Sciatic nerve (tissue), 2 donors: ENCODE measurements at regions of chr6 and their contacts with region 1.

Region 1: DNA sequence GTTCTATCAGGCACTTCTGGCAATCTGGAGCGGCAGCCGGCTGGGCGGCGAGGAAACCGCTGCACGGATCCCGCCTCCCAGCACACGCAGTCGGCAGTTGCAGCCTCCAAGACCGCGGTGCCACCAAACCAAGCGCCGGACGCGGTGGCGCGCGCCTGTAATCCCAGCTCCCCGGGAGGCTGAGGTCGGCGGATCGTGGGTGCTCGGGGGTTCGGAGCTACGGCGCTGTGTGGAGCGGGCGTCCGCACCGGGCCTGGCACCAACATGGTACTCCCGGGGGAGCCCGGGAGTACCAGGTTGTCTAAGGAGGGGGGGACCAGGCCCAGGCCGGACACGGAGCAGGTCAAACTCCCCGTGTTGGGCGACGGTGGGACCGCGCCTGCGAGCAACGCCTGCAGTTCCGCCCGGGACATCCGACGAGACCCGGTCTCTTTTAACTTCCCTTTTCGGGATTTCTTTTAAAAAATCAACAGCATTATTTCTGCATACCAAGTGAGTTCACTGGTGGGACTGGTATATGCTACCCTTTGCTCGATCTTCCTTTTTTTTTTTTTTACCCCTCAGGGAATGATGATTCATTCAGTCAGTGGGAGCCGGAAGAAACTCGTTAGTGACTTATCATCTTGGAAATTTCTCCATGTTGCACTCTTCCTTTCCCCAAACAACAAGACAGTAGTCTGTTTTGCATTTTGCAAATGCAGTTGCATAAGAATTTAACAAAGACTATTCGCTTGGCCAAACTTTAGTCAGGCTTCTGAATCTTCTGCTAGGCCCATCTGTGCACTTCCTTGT is 27.6 kb downstream of the ZNF311 start:
- DNase-seq: no peak
- ATAC-seq: no peak

Region 2: GRCh38 chr6:28523241-28523622 is 454.3 kb before region 1 on chr6:
- intact Hi-C with region 1: no loop called
- DNase-seq: no peak
- ATAC-seq: no peak

Region 3: DNA sequence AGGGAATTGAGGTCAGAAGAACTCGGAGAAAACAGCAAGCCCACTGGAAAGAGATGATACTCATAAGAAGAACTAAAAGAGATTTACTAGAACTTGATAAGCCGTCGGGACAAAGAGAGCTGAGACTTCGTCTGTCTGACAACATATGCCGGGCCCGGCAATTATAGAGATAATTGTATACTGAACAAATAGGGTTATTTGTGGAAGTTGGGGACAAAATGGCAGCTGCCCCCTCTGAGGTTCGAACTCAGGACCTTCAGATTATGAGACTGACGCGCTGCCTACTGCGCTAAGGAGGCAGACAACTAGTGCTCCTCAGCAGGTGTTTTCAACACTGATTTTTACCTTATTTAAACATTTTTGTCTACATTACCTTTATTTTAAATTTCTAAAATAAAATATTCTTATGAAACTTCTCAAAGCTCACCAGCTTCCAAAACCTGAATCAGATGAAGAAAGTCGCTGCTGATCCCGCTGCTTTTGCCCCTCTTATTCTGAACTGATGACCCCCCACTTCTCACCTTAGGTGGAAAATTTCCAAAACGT is 24.4 kb before region 1 on chr6:
- intact Hi-C with region 1: loop called (anchors 1 kb)
- DNase-seq: no peak
- ATAC-seq: peak; percentile 46